Activated CD8-positive, alpha-beta T cell treated with anti-CD3 and anti-CD28 coated beads, Interleukin-2, amount 10 ng/mL, durations not matched to agents 7 days and 5 days (primary cell): ENCODE measurements at regions of chr11 and their contacts with region 1.

Region 1: GRCh38 chr11:118021146-118021545 is 35.0 kb downstream of the IL10RA start:
- DNase-seq: no peak
- ATAC-seq: no peak
- H3K4me3 Mint-ChIP-seq: no peak overlapping the region
- H3K27ac Mint-ChIP-seq: no peak overlapping the region
- H3K4me1 Mint-ChIP-seq: peaks cover 26% of the 10 kb centered on the region
- H3K27me3 Mint-ChIP-seq: no peaks in the 10 kb centered on the region

Region 2: DNA sequence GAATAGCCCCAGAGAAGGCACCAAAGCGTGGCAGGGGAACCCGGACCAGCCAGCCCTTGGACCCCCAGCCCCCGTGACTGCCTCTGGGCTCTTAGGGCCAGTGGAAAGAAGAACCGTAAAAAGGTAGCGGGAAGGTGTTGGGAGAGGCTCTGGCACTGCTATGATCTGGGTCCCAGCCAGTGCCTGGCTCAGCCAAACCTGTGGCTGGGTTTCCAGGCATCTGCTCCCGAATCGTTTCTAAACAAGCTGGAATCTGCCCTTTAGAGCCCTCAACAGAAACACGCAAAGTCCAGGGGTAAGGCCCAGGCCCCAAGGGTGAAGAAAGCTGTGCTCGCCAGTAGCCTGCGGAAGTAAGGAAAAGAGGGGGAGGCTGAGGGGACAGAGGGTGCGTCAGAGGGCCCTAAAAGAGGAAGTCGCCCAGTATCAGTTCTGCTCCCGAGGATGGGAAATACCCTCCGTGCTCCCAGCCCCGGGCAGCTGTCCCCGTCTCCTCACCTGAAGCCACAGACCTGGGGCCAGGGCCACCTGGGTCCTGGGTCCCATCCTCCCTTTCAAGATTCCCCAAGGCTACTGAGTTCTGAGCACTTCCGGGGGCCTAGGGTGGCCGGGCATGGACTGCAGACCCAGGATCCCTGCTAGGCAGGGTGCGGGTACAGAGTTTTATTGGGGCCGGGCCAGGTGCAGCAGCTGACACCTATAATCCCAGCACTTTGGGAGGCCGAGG is 10.2 kb before region 1 on chr11:
- CTCF ChIA-PET with region 1: interaction called, 19 read pairs
- POLR2A ChIA-PET with region 1: interaction called, 18 read pairs
- DNase-seq: no peak
- ATAC-seq: no peak
- H3K4me3 Mint-ChIP-seq: no peak overlapping the region
- H3K27ac Mint-ChIP-seq: peak overlapping the region; percentile 90
- H3K4me1 Mint-ChIP-seq: peaks cover 100% of the 10 kb centered on the region
- H3K27me3 Mint-ChIP-seq: no peaks in the 10 kb centered on the region

Region 3: GRCh38 chr11:118088477-118088920 is 67.4 kb after region 1 on chr11:
- CTCF ChIA-PET with region 1: no interaction called
- POLR2A ChIA-PET with region 1: no interaction called
- DNase-seq: no peak
- ATAC-seq: no peak
- H3K4me3 Mint-ChIP-seq: no peak overlapping the region
- H3K27ac Mint-ChIP-seq: no peak overlapping the region
- H3K4me1 Mint-ChIP-seq: no peaks in the 10 kb centered on the region
- H3K27me3 Mint-ChIP-seq: peaks cover 6% of the 10 kb centered on the region

Region 4: DNA sequence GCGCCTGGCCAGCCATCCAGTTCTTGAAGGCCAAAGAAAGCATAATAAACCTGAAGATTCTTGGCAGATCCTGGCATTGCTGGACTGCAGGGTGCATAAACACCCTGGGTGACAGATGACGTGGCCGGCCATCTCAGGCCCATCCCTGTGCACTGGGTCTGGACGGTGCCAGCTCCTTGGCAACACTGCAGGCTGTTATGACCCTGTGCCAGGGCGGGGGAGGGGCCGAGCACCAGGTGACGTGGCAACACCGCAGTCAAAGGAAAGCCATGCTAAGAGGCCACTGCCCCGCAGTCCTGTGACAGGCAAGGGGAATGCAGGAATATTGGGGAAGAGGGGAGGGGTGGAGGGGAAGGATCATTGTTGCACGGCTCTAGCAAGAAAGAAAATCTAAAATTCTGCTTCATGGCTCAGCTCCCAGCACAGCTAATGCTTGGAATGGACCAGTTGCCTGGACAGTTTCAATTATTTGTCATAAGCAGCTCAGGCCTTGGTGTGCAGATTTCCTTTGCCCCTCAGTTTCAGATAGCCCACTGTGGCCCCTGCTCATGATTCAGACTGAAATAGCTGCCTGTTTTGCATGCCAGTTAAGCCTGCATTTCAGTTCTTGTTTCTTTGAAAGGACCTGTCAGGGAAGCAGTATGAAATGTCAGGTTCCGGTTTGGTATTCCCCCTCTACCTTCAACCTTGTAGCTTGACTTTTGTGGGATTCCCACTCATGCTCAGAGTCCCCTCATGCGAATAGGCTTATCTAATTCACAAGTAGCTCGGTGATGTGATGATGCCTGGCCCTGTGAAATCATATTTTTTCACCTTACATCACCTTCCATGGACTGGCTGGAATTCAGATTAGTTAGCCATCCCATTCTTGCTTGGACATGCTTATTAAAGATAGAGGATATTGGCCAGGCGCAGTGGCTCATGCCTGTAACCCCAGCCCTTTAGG is 799.5 kb after region 1 on chr11:
- CTCF ChIA-PET with region 1: no interaction called
- POLR2A ChIA-PET with region 1: no interaction called
- DNase-seq: no peak
- ATAC-seq: no peak
- H3K4me3 Mint-ChIP-seq: no peak overlapping the region
- H3K27ac Mint-ChIP-seq: no peak overlapping the region
- H3K4me1 Mint-ChIP-seq: peaks cover 10% of the 10 kb centered on the region
- H3K27me3 Mint-ChIP-seq: no peaks in the 10 kb centered on the region